Activated T-helper 1 cell treated with anti-CD3 and anti-CD28 coated beads, Interleukin-12 subunit alpha, Interleukin-12 subunit beta, Interleukin-2, Interleukin-4 antibody, amounts not matched to agents 30 ng/mL and 10 ng/mL and 1 ng/mL, durations not matched to agents 14 hours and 24 hours and 36 hours (primary cell): ENCODE measurements at regions of chr14 and their contacts with region 1.

Region 1: GRCh38 chr14:81269100-81269978 is 48.6 kb upstream of the GTF2A1 start:
- DNase-seq: no peak
- H3K4me3 Mint-ChIP-seq: no peak overlapping the region
- H3K27ac Mint-ChIP-seq: no peak overlapping the region
- H3K4me1 Mint-ChIP-seq: peaks cover 7% of the 10 kb centered on the region
- H3K27me3 Mint-ChIP-seq: peaks cover 26% of the 10 kb centered on the region

Region 2: DNA sequence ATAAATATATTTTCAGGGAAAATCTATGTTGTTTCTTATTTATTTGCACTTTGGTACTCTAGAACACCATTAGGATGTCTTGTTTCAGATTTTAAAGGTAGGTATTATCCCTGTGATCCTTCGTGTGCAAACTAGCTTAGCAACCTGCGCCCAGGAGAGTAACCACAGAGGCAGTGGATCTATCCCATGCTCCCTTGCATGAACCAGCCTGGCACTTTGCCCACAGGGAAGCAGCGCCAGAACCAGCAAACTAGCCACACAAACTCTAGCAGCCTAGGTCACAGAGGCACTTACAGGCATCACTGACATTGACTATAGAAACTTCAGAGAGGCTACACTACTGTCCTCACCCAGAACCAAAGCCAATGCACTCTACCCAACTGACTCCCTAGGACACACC is 237.9 kb before region 1 on chr14:
- intact Hi-C with region 1: no loop called
- DNase-seq: no peak
- H3K4me3 Mint-ChIP-seq: no peak overlapping the region
- H3K27ac Mint-ChIP-seq: no peak overlapping the region
- H3K4me1 Mint-ChIP-seq: no peaks in the 10 kb centered on the region
- H3K27me3 Mint-ChIP-seq: peaks cover under 1% of the 10 kb centered on the region

Region 3: DNA sequence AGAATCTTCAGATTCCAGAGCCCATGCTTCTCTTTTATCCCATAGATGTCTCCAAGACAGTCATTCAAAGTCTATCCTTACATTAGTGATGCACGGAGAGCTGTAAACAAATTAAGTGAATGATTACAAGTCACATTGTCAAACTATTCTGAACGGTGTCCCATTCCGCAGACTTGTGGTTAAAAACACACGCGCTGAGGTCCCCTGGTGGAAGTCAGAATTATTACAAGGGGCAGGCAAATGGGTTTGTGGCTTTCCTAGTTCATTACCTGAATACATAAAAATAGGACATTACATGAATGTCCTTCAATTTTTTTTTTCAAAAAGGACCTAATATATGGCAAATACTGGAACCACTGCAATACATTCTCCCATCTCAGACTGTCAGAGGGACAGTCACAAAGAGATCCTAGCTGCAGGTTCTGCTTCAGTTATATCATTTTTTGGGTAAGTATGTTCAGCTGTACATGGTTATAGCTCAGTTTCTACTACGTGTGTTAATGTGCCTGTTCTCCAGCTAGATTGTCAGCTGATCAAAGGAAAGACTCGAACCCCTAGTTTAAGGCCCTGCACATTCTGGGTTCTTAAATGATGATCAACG is 183.9 kb after region 1 on chr14:
- intact Hi-C with region 1: loop called (anchors 1 kb)
- DNase-seq: peak; percentile 31
- H3K4me3 Mint-ChIP-seq: no peak overlapping the region
- H3K27ac Mint-ChIP-seq: no peak overlapping the region
- H3K4me1 Mint-ChIP-seq: no peaks in the 10 kb centered on the region
- H3K27me3 Mint-ChIP-seq: peaks cover 12% of the 10 kb centered on the region

Region 4: GRCh38 chr14:81464247-81465002 is 195.1 kb after region 1 on chr14:
- intact Hi-C with region 1: loop called (anchors 1 kb)
- DNase-seq: peak; percentile 57
- H3K4me3 Mint-ChIP-seq: peak overlapping the region; percentile 77
- H3K27ac Mint-ChIP-seq: peak overlapping the region; percentile 63
- H3K4me1 Mint-ChIP-seq: peaks cover 12% of the 10 kb centered on the region
- H3K27me3 Mint-ChIP-seq: no peaks in the 10 kb centered on the region

Region 5: GRCh38 chr14:81589381-81590065 is 320.2 kb after region 1 on chr14:
- intact Hi-C with region 1: no loop called
- DNase-seq: no peak
- H3K4me3 Mint-ChIP-seq: no peak overlapping the region
- H3K27ac Mint-ChIP-seq: no peak overlapping the region
- H3K4me1 Mint-ChIP-seq: no peaks in the 10 kb centered on the region
- H3K27me3 Mint-ChIP-seq: peaks cover 5% of the 10 kb centered on the region